Right cardiac atrium (tissue), 5 donors: ENCODE measurements at regions of chr13 and their contacts with region 1.

Region 1: DNA sequence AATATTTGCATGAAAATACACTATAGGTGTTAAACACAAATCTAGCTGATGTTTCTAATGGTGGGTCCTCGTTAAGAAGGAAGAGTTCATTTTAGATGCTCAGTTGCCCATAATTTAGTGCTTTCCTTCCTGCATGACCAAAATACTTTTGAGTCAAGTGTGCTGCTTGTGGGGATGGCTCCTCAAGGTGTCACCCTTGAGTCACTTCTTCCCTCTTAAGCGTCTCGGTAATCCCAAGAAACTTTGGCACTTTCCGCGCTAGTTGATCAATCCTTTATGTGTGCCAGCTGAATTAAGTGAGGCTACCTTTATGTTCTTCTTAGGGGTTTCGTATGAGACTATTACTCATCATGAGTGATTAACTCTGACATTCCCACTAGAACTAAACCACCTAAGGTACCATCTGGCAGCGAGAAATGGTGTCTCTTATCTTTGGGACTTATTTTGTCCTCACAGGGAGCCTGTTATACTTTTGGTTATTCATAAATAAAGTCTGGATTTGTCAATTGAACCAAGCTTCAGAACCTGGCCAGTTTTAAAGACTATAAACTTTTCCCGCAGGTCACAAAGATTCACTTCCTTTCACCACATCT is 106.8 kb downstream of the NHLRC3 start:
- DNase-seq: peak in 2 of 3 donors; percentile 51 to 72
- ATAC-seq: peak; percentile 71 to 75
- H3K4me3 ChIP-seq: peak overlapping the region; percentile 27
- H3K27ac ChIP-seq: no peak overlapping the region
- H3K4me1 ChIP-seq: no peaks in the 10 kb centered on the region
- H3K27me3 ChIP-seq: no peaks in the 10 kb centered on the region

Region 2: DNA sequence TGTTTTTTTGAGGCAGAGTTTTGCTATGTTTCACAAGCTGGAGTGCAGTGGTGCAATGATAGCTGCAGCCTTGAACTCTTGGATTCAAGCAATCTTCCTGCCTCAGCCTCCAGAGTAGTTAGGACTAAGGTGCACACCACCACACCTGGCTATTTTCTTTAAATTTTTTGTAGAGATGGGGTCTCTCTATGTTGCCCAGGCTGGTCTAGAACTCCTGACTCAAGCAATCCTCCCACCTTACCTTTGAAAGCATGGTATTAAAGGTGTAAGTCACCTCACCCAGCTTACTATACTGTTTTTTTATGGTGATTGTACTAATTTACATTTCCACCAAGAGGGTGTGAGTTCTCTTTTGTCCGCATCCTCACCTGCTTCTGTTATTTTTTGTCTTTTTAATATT is 348.1 kb before region 1 on chr13:
- intact Hi-C with region 1: no loop called
- DNase-seq: no peak
- ATAC-seq: no peak
- H3K4me3 ChIP-seq: no peak overlapping the region
- H3K27ac ChIP-seq: no peak overlapping the region
- H3K4me1 ChIP-seq: no peaks in the 10 kb centered on the region
- H3K27me3 ChIP-seq: no peaks in the 10 kb centered on the region

Region 3: DNA sequence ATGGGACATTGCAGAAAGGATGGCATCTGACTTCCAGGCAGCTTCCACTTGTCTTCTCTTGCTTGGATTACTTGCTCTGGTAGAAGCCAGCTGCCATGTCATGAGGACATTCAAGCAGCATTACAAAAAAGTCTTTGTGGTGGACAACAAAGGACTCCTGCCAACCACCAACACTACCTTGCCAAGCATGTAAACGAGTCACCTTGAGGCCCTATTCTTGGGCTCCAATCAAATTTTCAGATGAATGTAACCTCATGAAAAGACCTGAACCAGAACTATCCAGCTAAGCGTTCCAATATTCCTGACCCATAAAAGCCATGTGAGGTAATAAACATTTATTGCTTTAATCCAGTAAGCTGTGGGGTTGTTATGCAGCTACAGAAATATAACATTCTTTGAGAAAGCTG is 119.6 kb before region 1 on chr13:
- intact Hi-C with region 1: no loop called
- DNase-seq: no peak
- ATAC-seq: no peak
- H3K4me3 ChIP-seq: no peak overlapping the region
- H3K27ac ChIP-seq: no peak overlapping the region
- H3K4me1 ChIP-seq: no peaks in the 10 kb centered on the region
- H3K27me3 ChIP-seq: no peaks in the 10 kb centered on the region

Region 4: GRCh38 chr13:39263033-39263432 is 118.0 kb after region 1 on chr13:
- intact Hi-C with region 1: loop called in 3 of 4 experiments (anchors 2 to 5 kb)
- DNase-seq: peak in 1 of 3 donors; percentile 48
- ATAC-seq: peak; percentile 79 to 88
- H3K4me3 ChIP-seq: no peak overlapping the region
- H3K27ac ChIP-seq: peak overlapping the region; percentile 80
- H3K4me1 ChIP-seq: peaks cover 6% of the 10 kb centered on the region
- H3K27me3 ChIP-seq: no peaks in the 10 kb centered on the region

Region 5: GRCh38 chr13:39273953-39274738 is 129.1 kb after region 1 on chr13:
- intact Hi-C with region 1: loop called in 1 of 4 experiments (anchors 5 kb)
- DNase-seq: peak in 1 of 3 donors; percentile 43
- ATAC-seq: no peak
- H3K4me3 ChIP-seq: no peak overlapping the region
- H3K27ac ChIP-seq: no peak overlapping the region
- H3K4me1 ChIP-seq: peaks cover 5% of the 10 kb centered on the region
- H3K27me3 ChIP-seq: no peaks in the 10 kb centered on the region

Region 6: DNA sequence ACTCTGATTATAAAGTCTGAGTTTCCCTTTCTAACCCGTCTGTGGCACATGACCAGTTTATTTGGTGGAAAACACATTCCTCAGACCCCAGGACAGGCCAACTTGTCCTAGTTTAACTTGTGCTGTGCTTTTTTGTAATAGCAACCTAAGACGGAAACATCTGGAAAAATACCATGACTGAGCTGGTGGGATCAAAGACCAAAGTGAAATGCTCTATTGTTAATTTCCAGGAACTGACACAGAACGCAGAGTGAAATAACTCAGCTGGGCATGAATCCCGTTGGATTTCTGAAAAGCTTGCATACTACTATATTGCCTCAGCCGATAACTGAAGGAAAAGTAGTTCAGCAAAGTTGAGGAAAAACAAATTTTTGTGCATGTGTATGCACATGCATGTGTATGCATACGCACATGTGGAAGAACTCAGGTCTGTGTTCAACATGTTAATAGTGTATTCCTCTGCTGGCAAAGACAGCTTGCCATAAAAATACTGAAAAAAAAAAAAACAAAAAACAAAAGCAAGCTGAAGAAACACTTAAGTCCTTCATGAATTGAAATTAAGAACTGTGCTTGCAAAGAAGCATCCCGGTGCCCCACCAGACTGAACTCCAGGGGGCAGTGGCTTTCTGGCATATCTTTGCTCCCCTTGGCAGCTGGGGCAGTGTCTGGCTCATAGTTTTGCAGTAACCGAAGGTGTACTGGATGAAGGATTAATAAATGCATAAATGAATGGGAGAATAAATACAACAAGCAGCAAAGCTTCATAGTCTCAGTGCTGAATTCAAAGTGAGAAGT is 270.2 kb after region 1 on chr13:
- intact Hi-C with region 1: loop called in 1 of 4 experiments (anchors 10 kb)
- DNase-seq: peak; percentile 49 to 77 (median 73)
- ATAC-seq: peak; percentile 67 to 88
- H3K4me3 ChIP-seq: peak overlapping the region; percentile 32
- H3K27ac ChIP-seq: peak overlapping the region; percentile 58
- H3K4me1 ChIP-seq: peaks cover 11% of the 10 kb centered on the region
- H3K27me3 ChIP-seq: no peaks in the 10 kb centered on the region

Region 7: DNA sequence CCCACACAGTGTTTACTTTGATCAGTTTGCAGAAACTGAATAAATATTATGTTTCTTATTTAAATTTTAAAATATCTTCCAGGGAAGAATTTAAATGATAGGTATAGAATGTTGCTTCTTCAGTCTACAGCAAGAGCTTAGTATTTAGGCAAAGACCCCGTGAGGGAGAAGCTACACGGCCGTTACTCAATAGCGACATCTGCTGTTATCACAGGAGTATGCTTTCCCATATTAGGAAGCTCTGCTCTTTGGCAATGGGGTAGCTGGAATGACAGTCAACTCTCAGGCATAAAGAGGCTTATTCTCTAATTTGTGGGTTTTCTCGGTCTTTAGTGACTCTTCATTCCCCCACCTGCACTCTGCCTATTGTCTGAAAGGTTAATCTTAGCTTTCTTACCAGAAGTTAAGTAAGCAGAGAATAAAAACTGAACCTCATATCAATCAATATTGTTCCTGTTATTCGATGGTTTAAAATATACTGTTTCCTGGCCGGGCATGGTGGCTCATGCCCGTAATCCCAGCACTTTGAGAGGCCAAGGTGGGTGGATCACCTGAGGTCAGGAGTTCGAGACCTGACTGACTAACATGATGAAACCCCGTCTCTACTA is 471.2 kb after region 1 on chr13:
- intact Hi-C with region 1: loop called (anchors 5 to 10 kb)
- DNase-seq: peak in 2 of 3 donors; percentile 24 to 46
- ATAC-seq: peak; percentile 84
- H3K4me3 ChIP-seq: no peak overlapping the region
- H3K27ac ChIP-seq: no peak overlapping the region
- H3K4me1 ChIP-seq: no peaks in the 10 kb centered on the region
- H3K27me3 ChIP-seq: no peaks in the 10 kb centered on the region